Naive thymus-derived CD4-positive, alpha-beta T cell (primary cell): ENCODE measurements at regions of chr13 and their contacts with region 1.

Region 1: GRCh38 chr13:97109841-97110492 is 112.2 kb upstream of the MBNL2 start:
- DNase-seq: peak; percentile 59 to 85 (median 76)
- ATAC-seq: peak; percentile 97
- H3K4me3 ChIP-seq: no peak overlapping the region
- H3K4me3 Mint-ChIP-seq: peak overlapping the region in 9 of 10 donors; percentile 19 to 71 (median 45)
- H3K27ac ChIP-seq: no peak overlapping the region
- H3K27ac Mint-ChIP-seq: peak overlapping the region in 1 of 9 donors; percentile 68
- H3K4me1 ChIP-seq: peaks cover 3 to 9% of the 10 kb centered on the region in 2 donors
- H3K4me1 Mint-ChIP-seq: peaks cover 7 to 19% (median 15%) of the 10 kb centered on the region in 7 donors
- H3K27me3 ChIP-seq: no peaks in the 10 kb centered on the region
- H3K27me3 Mint-ChIP-seq: peaks cover 8 to 23% (median 19%) of the 10 kb centered on the region in 5 donors

Region 2: GRCh38 chr13:97344265-97345175 is 234.6 kb after region 1 on chr13:
- CTCF ChIA-PET with region 1: interaction called, 22 read pairs
- POLR2A ChIA-PET with region 1: no interaction called
- intact Hi-C with region 1: loop called (anchors 1 kb)
- DNase-seq: peak in 6 of 9 donors; percentile 22 to 53 (median 39)
- ATAC-seq: peak; percentile 54
- H3K4me3 ChIP-seq: no peak overlapping the region
- H3K4me3 Mint-ChIP-seq: no peak overlapping the region
- H3K27ac ChIP-seq: no peak overlapping the region
- H3K27ac Mint-ChIP-seq: no peak overlapping the region
- H3K4me1 ChIP-seq: no peaks in the 10 kb centered on the region
- H3K4me1 Mint-ChIP-seq: peaks cover 0 to 4% (median 0%) of the 10 kb centered on the region in 7 donors
- H3K27me3 ChIP-seq: no peaks in the 10 kb centered on the region
- H3K27me3 Mint-ChIP-seq: no peaks in the 10 kb centered on the region

Region 3: GRCh38 chr13:97574926-97575325 is 465.0 kb after region 1 on chr13:
- CTCF ChIA-PET with region 1: no interaction called
- POLR2A ChIA-PET with region 1: no interaction called
- intact Hi-C with region 1: loop called in 1 of 2 experiments (anchors 5 kb)
- DNase-seq: no peak
- ATAC-seq: no peak
- H3K4me3 ChIP-seq: no peak overlapping the region
- H3K4me3 Mint-ChIP-seq: no peak overlapping the region
- H3K27ac ChIP-seq: no peak overlapping the region
- H3K27ac Mint-ChIP-seq: no peak overlapping the region
- H3K4me1 ChIP-seq: no peaks in the 10 kb centered on the region
- H3K4me1 Mint-ChIP-seq: no peaks in the 10 kb centered on the region
- H3K27me3 ChIP-seq: no peaks in the 10 kb centered on the region
- H3K27me3 Mint-ChIP-seq: peaks cover 6 to 18% (median 12%) of the 10 kb centered on the region in 5 donors

Region 4: DNA sequence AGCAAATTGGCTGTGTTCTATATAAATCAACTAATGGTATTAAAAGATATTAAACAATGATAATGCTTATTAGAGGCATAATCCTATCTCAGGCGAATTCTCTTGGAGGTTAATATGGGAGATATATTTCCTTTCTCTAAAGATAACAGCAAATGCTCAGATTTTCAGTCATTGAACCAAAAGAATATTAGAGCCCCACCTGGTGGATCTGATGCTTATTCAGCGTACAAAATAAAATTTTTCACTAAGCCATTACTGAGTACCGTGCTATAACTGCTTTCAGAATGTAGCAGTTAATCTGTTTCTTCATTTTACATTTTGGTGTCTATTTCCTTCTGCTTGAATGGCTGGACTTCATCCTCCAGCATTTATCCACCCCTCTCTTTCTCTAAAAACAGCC is 700.2 kb after region 1 on chr13:
- CTCF ChIA-PET with region 1: no interaction called
- POLR2A ChIA-PET with region 1: no interaction called
- intact Hi-C with region 1: loop called in 1 of 2 experiments (anchors 5 kb)
- DNase-seq: no peak
- ATAC-seq: no peak
- H3K4me3 ChIP-seq: no peak overlapping the region
- H3K4me3 Mint-ChIP-seq: no peak overlapping the region
- H3K27ac ChIP-seq: no peak overlapping the region
- H3K27ac Mint-ChIP-seq: no peak overlapping the region
- H3K4me1 ChIP-seq: no peaks in the 10 kb centered on the region
- H3K4me1 Mint-ChIP-seq: no peaks in the 10 kb centered on the region
- H3K27me3 ChIP-seq: no peaks in the 10 kb centered on the region
- H3K27me3 Mint-ChIP-seq: peaks cover 0 to 37% (median 28%) of the 10 kb centered on the region in 5 donors